ENCODE measurements at regions of chr12 and their contacts with region 1.

Region 1: DNA sequence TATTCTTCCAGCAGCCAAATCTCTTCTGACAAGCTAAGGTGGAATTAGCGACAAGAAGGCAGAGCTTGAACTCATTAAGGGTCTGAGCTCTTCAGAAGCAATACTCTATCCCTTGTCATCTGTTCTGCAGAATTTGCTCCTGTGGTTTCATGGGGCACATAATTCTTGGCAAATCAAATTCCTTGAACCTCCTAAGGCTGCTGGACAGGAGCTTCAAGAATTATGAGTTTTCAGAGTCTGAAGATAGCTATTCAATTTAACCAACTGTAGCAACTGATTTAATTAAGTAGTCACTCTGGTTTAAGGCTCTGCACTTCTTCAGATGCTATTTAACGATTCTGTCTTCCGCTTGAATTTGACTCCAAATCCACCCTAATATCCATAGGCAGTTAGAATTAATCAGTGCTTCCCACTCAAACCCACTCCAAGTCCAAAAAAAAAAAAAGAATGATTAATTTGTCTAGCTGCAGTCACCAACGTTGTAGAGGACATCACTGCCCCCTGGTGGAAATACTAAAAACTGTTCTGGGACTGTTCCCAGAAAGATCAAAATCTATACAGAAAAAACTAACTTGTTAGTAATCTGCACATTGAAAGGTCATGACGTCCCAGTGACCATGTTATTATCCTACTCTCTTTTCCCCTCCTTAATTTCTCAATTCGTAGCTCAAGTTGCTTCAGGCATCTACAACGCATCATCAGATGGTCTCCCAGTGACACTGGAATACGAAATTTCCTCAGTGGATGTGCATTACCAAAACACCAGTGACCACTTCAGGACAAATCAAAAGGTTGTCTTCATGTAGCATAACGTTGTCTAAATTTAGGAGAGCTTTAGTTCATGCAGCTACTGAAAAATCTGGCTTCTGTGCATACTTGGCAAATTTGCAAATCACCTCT is 169.8 kb downstream of the KIF21A start:
- DNase-seq: peak; percentile 4 to 48
- ATAC-seq: peak; percentile 52 to 68; a peak in 2 of 6 replicates
- H3K4me3 ChIP-seq: no peak overlapping the region
- H3K27ac ChIP-seq: no peak overlapping the region
- H3K4me1 ChIP-seq: no peaks in the 10 kb centered on the region
- CTCF ChIP-seq: peak; percentile 78
- EP300 ChIP-seq: no peak
- POLR2A ChIP-seq: no peak
- RAD21 ChIP-seq: peak; percentile 79 to 86

Region 2: GRCh38 chr12:38921025-38921677 is 352.0 kb before region 1 on chr12:
- CTCF ChIA-PET with region 1: interaction called, 42 read pairs
- POLR2A ChIA-PET with region 1: no interaction called
- DNase-seq: peak; percentile 37 to 83
- ATAC-seq: peak; percentile 97
- H3K4me3 ChIP-seq: no peak overlapping the region
- H3K27ac ChIP-seq: no peak overlapping the region
- H3K4me1 ChIP-seq: no peaks in the 10 kb centered on the region
- CTCF ChIP-seq: peak; percentile 79
- EP300 ChIP-seq: no peak
- POLR2A ChIP-seq: no peak
- RAD21 ChIP-seq: peak; percentile 67 to 73

Region 3: DNA sequence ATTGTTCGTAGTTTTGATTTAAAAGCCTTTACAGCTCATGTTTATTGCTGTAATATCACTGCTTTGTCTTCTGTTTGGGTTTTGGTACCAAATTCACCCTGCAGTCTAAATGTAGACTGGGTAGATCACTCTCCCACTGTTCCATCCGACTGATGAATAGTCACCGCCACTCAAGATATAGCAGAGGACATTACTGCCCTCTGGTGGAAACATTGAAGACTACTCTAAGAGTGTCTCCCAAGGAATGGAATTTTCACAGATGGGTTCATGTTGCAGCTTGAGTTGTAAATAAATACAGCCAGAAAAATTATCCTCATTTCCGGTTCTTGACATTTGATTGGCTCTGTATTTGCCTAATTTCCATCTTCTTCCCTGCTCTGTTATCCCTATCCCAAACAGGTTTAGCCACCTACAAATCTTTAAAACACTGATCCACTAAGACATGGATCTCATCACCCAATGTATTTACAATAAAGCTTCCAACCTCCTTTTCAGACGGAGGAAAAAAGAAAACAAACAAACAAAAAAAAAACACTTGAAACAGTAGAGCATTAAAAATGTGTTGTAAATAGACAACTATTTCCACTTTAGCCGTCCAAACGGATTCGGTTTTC is 169.5 kb before region 1 on chr12:
- CTCF ChIA-PET with region 1: interaction called, 20 read pairs
- POLR2A ChIA-PET with region 1: no interaction called
- DNase-seq: peak; percentile 64 to 75
- ATAC-seq: peak; percentile 96 to 99
- H3K4me3 ChIP-seq: no peak overlapping the region
- H3K27ac ChIP-seq: no peak overlapping the region
- H3K4me1 ChIP-seq: no peaks in the 10 kb centered on the region
- CTCF ChIP-seq: peak; percentile 80
- EP300 ChIP-seq: no peak
- POLR2A ChIP-seq: no peak
- RAD21 ChIP-seq: peak; percentile 77 to 89

Region 4: DNA sequence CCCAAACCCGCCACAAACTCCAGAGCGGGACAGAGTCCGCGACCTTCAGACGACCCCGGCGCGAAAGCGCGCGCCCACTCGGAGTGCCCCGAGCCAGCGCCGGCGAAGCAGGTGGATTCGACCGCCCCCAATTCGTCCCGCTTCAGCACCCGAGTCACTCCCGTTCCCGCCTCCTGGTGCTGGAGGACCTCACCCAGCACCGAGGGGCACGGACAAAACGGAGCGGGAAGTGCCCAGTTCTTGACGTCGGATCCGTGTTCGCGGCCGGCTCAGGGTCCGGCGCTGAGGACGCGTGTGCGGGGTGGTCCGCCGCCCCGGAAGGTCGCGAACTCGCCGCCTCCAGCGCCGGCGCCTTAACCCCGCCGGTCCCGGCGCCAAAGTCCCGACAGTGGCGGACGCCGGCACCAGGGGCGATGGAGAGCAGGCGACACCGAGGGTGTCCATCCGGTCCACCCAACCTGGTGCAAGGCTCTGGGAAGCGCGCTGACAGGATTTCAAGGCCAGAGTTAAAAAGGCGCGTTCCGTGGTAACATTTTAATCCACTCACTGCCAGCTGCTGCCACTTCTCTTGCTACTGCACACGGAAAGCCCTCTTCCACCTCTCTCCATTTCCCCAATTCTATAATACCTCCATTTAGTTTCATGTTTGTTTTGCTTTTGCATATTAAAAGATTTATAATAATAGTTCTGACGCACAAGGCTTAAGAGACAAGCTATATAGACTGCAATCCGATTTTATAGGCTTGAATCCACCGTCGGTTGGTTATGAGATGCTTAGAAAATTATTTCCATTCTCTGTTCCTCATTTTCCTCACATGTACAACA is 127.7 kb before region 1 on chr12:
- CTCF ChIA-PET with region 1: interaction called, 101 read pairs
- POLR2A ChIA-PET with region 1: no interaction called
- DNase-seq: peak; percentile 64 to 77
- ATAC-seq: peak; percentile 97 to 100
- H3K4me3 ChIP-seq: peak overlapping the region; percentile 80
- H3K27ac ChIP-seq: peak overlapping the region; percentile 74 to 89; a peak in 5 of 6 replicates
- H3K4me1 ChIP-seq: no peaks in the 10 kb centered on the region
- CTCF ChIP-seq: peak; percentile 78
- EP300 ChIP-seq: no peak
- POLR2A ChIP-seq: no peak
- RAD21 ChIP-seq: peak; percentile 72 to 77

Region 5: GRCh38 chr12:39237004-39237403 is 36.1 kb before region 1 on chr12:
- CTCF ChIA-PET with region 1: interaction called, 25 read pairs
- POLR2A ChIA-PET with region 1: no interaction called
- DNase-seq: peak; percentile 24 to 70
- ATAC-seq: peak; percentile 89 to 94
- H3K4me3 ChIP-seq: no peak overlapping the region
- H3K27ac ChIP-seq: peak overlapping the region in 1 of 2 experiments; percentile 20; a peak in 1 of 6 replicates
- H3K4me1 ChIP-seq: peaks cover 24% of the 10 kb centered on the region
- CTCF ChIP-seq: no peak
- EP300 ChIP-seq: no peak; a peak in 1 of 5 replicates
- POLR2A ChIP-seq: no peak
- RAD21 ChIP-seq: no peak

Region 6: GRCh38 chr12:39287817-39288216 is 14.7 kb after region 1 on chr12:
- CTCF ChIA-PET with region 1: interaction called, 12 read pairs
- POLR2A ChIA-PET with region 1: no interaction called
- DNase-seq: no peak
- ATAC-seq: no peak
- H3K4me3 ChIP-seq: no peak overlapping the region
- H3K27ac ChIP-seq: no peak overlapping the region
- H3K4me1 ChIP-seq: no peaks in the 10 kb centered on the region
- CTCF ChIP-seq: no peak
- EP300 ChIP-seq: no peak
- POLR2A ChIP-seq: no peak
- RAD21 ChIP-seq: no peak